Right lobe of liver (tissue), 6 donors: ENCODE measurements at regions of chr10 and their contacts with region 1.

Region 1: DNA sequence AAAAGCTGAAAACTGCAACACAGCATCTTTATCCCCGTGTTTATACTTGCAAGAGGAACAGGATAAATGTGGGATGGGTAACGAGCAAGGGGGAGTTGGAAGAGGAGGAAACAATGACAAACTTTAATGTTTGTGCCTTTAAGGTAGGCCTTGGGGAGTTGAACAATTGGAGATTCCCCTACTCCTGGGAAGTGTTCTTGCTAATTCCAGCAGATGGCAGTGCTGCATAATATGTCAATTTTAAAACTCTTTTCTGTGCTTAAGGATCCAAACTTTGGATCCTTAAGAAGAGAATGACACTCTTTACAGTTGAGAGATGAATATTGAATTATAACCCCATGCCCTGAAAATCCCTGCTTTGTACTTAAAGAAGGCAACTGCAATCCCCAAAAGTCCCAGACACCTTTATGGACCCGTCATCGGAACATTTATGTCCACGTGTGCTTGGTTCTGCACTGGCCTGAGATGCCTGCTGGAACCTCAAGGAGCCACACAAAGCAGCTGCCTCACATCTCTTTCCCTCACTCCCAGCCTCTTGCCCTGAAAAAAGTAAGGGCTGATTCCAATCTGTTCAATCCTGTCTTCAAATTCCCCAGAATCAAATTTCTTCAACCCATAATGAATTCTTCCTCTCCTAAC is 12.0 kb downstream of the IFIT5 start:
- DNase-seq: no peak
- ATAC-seq: peak; percentile 83 to 89 (median 89)
- H3K4me3 ChIP-seq: no peak overlapping the region
- H3K27ac ChIP-seq: peak overlapping the region in 1 of 3 donors; percentile 82
- H3K4me1 ChIP-seq: peaks cover 0 to 16% (median 5%) of the 10 kb centered on the region in 4 donors
- H3K27me3 ChIP-seq: no peaks in the 10 kb centered on the region
- CTCF ChIP-seq: peak; percentile 78 to 87 (median 82)
- POLR2A ChIP-seq: no peak

Region 2: GRCh38 chr10:89563861-89564478 is 137.6 kb after region 1 on chr10:
- intact Hi-C with region 1: loop called in 1 of 2 experiments (anchors 10 kb)
- DNase-seq: no peak
- ATAC-seq: peak; percentile 81 to 93 (median 84)
- H3K4me3 ChIP-seq: no peak overlapping the region
- H3K27ac ChIP-seq: no peak overlapping the region
- H3K4me1 ChIP-seq: peaks cover 0 to 16% (median 0%) of the 10 kb centered on the region in 4 donors
- H3K27me3 ChIP-seq: no peaks in the 10 kb centered on the region
- CTCF ChIP-seq: peak; percentile 73 to 82 (median 80)
- POLR2A ChIP-seq: no peak